Motor neuron (in vitro differentiated cells): ENCODE measurements at regions of chr21 and their contacts with region 1.

Region 1: GRCh38 chr21:31107871-31108270 is 69.6 kb upstream of the KRTAP19-8 start:
- ATAC-seq: no peak
- H3K4me3 ChIP-seq: no peak overlapping the region
- H3K27ac ChIP-seq: no peak overlapping the region
- H3K4me1 ChIP-seq: no peaks in the 10 kb centered on the region

Region 2: GRCh38 chr21:31161157-31161556 is 53.3 kb after region 1 on chr21:
- in situ Hi-C with region 1: loop called in 1 of 9 experiments (anchors 10 kb)
- ATAC-seq: peak; percentile 87 to 94 (median 89)
- H3K4me3 ChIP-seq: peak overlapping the region in 4 of 5 donors; percentile 27 to 36 (median 28)
- H3K27ac ChIP-seq: no peak overlapping the region
- H3K4me1 ChIP-seq: peaks cover 3 to 18% of the 10 kb centered on the region in 2 donors